ENCODE measurements at regions of chr2 and their contacts with region 1.

Region 1: GRCh38 chr2:148020111-148021058 is at the start of gene ORC4:
- DNase-seq: peak; percentile 89 to 99 (median 94)
- ATAC-seq: peak; percentile 90 to 93 (median 92)
- H3K4me3 ChIP-seq: peak within 1 kb of the TSS; percentile 83 to 95
- H3K4me3 Mint-ChIP-seq: peak within 1 kb of the TSS; percentile 96 to 99 (median 99)
- H3K27ac ChIP-seq: peak within 1 kb of the TSS; percentile 96
- H3K27ac Mint-ChIP-seq: peak within 1 kb of the TSS; percentile 96 to 98
- H3K4me1 ChIP-seq: peaks cover 16 to 27% of the 10 kb centered on the region in 2 experiments
- H3K4me1 Mint-ChIP-seq: peaks cover 68 to 75% (median 72%) of the 10 kb centered on the region in 3 donors
- H3K27me3 ChIP-seq: no peaks in the 10 kb centered on the region
- H3K27me3 Mint-ChIP-seq: no peaks in the 10 kb centered on the region
- total RNA-seq, gene ORC4: 40.3 to 46.8 (median 42.1) TPM

Region 2: GRCh38 chr2:147374423-147374811 is 646.0 kb before region 1 on chr2:
- CTCF ChIA-PET with region 1: no interaction called
- POLR2A ChIA-PET with region 1: interaction called in 1 of 2 experiments, 12 read pairs
- DNase-seq: no peak
- ATAC-seq: no peak
- H3K4me3 ChIP-seq: no peak overlapping the region
- H3K4me3 Mint-ChIP-seq: no peak overlapping the region
- H3K27ac ChIP-seq: no peak overlapping the region
- H3K27ac Mint-ChIP-seq: no peak overlapping the region
- H3K4me1 ChIP-seq: no peaks in the 10 kb centered on the region
- H3K4me1 Mint-ChIP-seq: peaks cover 0 to 4% (median 3%) of the 10 kb centered on the region in 3 donors
- H3K27me3 ChIP-seq: no peaks in the 10 kb centered on the region
- H3K27me3 Mint-ChIP-seq: no peaks in the 10 kb centered on the region

Region 3: GRCh38 chr2:147531269-147531668 is 489.1 kb before region 1 on chr2:
- CTCF ChIA-PET with region 1: no interaction called
- POLR2A ChIA-PET with region 1: no interaction called
- DNase-seq: no peak
- ATAC-seq: no peak
- H3K4me3 ChIP-seq: no peak overlapping the region
- H3K4me3 Mint-ChIP-seq: no peak overlapping the region
- H3K27ac ChIP-seq: no peak overlapping the region
- H3K27ac Mint-ChIP-seq: no peak overlapping the region
- H3K4me1 ChIP-seq: peaks cover 0 to 11% of the 10 kb centered on the region in 2 experiments
- H3K4me1 Mint-ChIP-seq: peaks cover 5 to 15% (median 10%) of the 10 kb centered on the region in 3 donors
- H3K27me3 ChIP-seq: no peaks in the 10 kb centered on the region
- H3K27me3 Mint-ChIP-seq: no peaks in the 10 kb centered on the region

Region 4: DNA sequence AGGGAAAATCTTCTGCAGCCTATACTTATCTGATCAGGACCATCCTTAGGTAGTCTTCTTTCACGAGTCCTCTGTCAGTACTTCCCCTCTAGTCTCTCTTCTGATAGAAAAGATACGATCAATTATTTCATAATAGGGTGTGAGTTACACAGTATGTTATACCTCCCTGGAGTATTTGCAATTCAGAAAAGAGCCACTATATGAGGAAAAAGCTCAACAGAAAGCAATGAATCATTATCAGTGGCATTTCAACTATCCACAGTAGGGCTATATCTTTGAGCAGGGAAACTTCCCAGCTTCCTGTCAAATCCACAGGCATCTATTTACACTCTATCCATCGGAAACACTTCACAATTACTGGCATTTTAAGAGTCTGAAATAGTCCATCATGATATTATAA is 280.9 kb before region 1 on chr2:
- CTCF ChIA-PET with region 1: no interaction called
- POLR2A ChIA-PET with region 1: no interaction called
- DNase-seq: no peak
- ATAC-seq: no peak
- H3K4me3 ChIP-seq: no peak overlapping the region
- H3K4me3 Mint-ChIP-seq: no peak overlapping the region
- H3K27ac ChIP-seq: no peak overlapping the region
- H3K27ac Mint-ChIP-seq: no peak overlapping the region
- H3K4me1 ChIP-seq: no peaks in the 10 kb centered on the region
- H3K4me1 Mint-ChIP-seq: no peaks in the 10 kb centered on the region
- H3K27me3 ChIP-seq: no peaks in the 10 kb centered on the region
- H3K27me3 Mint-ChIP-seq: no peaks in the 10 kb centered on the region

Region 5: GRCh38 chr2:147989809-147990403 is 30.5 kb before region 1 on chr2:
- CTCF ChIA-PET with region 1: interaction called, 6 to 10 read pairs
- POLR2A ChIA-PET with region 1: no interaction called
- DNase-seq: peak in 24 of 35 experiments; percentile 2 to 70 (median 19)
- ATAC-seq: peak; percentile 61 to 80 (median 66)
- H3K4me3 ChIP-seq: no peak overlapping the region
- H3K4me3 Mint-ChIP-seq: no peak overlapping the region
- H3K27ac ChIP-seq: no peak overlapping the region
- H3K27ac Mint-ChIP-seq: no peak overlapping the region
- H3K4me1 ChIP-seq: no peaks in the 10 kb centered on the region
- H3K4me1 Mint-ChIP-seq: peaks cover 20 to 40% (median 30%) of the 10 kb centered on the region in 3 donors
- H3K27me3 ChIP-seq: no peaks in the 10 kb centered on the region
- H3K27me3 Mint-ChIP-seq: no peaks in the 10 kb centered on the region

Region 6: GRCh38 chr2:148814143-148814859 is 793.9 kb after region 1 on chr2:
- CTCF ChIA-PET with region 1: interaction called in 1 of 2 experiments, 5 read pairs
- POLR2A ChIA-PET with region 1: interaction called in 1 of 2 experiments, 10 read pairs
- DNase-seq: no peak
- ATAC-seq: peak in 1 of 4 experiments; percentile 11
- H3K4me3 ChIP-seq: no peak overlapping the region
- H3K4me3 Mint-ChIP-seq: peak overlapping the region in 1 of 3 donors; percentile 37
- H3K27ac ChIP-seq: no peak overlapping the region
- H3K27ac Mint-ChIP-seq: peak overlapping the region; percentile 45 to 57
- H3K4me1 ChIP-seq: peaks cover 2 to 9% of the 10 kb centered on the region in 2 experiments
- H3K4me1 Mint-ChIP-seq: peaks cover 9 to 26% (median 20%) of the 10 kb centered on the region in 3 donors
- H3K27me3 ChIP-seq: peaks cover 0 to 5% of the 10 kb centered on the region in 2 experiments
- H3K27me3 Mint-ChIP-seq: peaks cover 2 to 21% of the 10 kb centered on the region in 2 donors